ENCODE measurements at regions of chr11 and their contacts with region 1.

Region 1: DNA sequence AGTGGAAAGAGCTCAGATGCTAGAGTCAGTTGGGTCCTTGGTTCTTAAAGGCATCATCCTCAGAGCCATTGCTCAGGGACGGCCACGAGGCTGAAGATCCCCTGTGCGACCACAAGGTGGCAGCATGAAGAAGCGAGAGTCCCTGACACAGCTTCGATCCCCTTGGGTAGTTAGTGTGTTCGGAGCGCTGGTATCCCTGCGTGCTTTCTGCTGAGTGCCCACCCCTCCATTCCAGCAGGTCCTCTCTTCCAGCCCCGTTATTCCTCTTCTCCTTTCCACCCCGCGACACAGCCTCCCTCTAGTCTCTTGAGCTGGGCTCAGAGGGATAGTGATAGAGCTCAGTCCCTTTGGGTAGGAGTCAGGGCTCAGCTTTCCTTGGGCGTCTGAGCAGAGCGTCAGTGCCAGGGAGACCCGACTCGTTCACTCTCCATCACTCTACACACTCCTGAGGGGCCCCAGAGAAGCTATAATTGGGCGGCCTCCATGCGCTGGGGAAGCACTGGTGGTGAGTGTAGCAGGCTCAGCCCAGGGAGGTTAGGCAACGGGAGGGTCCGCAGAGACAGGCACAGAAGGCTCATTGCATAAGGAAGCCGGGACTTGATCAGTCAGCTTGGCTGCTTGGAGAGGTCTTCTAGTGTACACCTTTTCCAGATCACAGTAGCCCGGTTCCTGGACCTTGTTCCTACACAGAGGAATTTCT is at the start of gene OR51D1:
- DNase-seq: peak; percentile 90
- H3K4me3 Mint-ChIP-seq: no peak within 1 kb of the TSS
- H3K27ac Mint-ChIP-seq: no peak within 1 kb of the TSS
- H3K4me1 Mint-ChIP-seq: no peaks in the 10 kb centered on the region
- H3K27me3 Mint-ChIP-seq: no peaks in the 10 kb centered on the region
- total RNA-seq, gene OR51D1: not detected in 2 replicates

Region 2: GRCh38 chr11:4782488-4782887 is 145.4 kb after region 1 on chr11:
- intact Hi-C with region 1: loop called (anchors 10 kb)
- DNase-seq: no peak
- H3K4me3 Mint-ChIP-seq: no peak overlapping the region
- H3K27ac Mint-ChIP-seq: no peak overlapping the region
- H3K4me1 Mint-ChIP-seq: no peaks in the 10 kb centered on the region
- H3K27me3 Mint-ChIP-seq: no peaks in the 10 kb centered on the region

Region 3: DNA sequence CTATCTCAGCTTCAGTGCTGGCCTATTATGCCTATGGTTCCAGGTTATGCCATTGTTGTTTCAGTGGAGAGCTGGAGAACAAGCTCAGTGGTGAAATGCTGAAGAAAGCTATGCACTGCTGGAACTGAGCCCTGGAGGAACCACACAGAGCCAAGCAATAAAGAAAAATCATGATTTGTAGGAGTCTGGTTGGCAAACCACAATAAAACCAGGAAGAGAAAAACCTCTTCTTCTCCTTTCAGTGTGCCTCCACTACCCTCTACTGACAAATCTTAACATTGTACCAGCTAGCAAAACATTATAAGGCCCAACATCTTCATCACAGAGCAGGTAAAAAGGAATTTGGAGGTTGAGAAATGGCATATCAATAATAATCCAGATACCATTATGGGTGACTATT is 189.3 kb after region 1 on chr11:
- intact Hi-C with region 1: no loop called
- DNase-seq: no peak
- H3K4me3 Mint-ChIP-seq: no peak overlapping the region
- H3K27ac Mint-ChIP-seq: no peak overlapping the region
- H3K4me1 Mint-ChIP-seq: no peaks in the 10 kb centered on the region
- H3K27me3 Mint-ChIP-seq: no peaks in the 10 kb centered on the region

Region 4: DNA sequence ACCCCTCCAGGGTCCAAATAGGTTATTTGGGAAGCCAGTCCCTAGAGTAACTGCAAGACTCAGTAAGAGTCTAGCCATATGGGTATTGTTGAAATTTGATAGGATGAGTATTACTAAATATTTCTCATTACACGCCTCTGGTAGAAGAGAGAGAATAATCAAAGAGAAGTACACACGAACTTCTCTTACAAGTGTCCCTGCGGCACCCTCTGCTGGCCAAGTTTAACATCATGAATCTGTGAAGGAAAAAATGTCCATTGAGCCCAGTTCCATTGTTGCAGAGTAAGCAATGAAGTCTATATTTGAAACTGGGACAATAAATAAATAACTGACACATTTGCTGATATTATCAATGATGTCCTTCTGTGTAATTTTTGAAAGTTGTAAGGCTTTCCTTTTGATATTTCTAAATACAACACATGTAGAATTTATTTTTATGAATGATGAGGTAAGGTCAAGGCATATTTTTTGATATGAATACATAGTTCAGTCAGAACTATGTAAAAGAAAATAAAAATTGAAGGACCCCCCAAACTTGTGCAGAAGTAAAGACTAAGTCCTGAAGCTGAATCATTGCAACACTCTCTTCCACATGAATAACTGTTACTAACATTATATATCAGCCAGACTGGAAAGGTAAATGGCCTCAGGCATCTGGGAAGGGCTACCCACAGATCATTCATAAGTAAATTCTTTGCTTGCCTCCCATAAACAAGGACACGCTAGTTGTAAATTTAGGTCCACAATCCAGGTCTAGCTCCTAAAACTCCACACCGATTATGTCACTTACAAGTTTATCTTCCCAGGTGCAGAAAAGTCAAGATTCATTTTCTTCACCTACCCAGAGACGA is 367.5 kb after region 1 on chr11:
- intact Hi-C with region 1: loop called (anchors 2 kb)
- DNase-seq: peak; percentile 74
- H3K4me3 Mint-ChIP-seq: no peak overlapping the region
- H3K27ac Mint-ChIP-seq: no peak overlapping the region
- H3K4me1 Mint-ChIP-seq: no peaks in the 10 kb centered on the region
- H3K27me3 Mint-ChIP-seq: no peaks in the 10 kb centered on the region